ENCODE measurements at regions of chr4 and their contacts with region 1.

Region 1: GRCh38 chr4:68271851-68272756 is 26.6 kb upstream of the TMPRSS11B start:
- DNase-seq: peak; percentile 67
- H3K4me3 Mint-ChIP-seq: peak overlapping the region; percentile 77
- H3K27ac Mint-ChIP-seq: no peak overlapping the region
- H3K4me1 Mint-ChIP-seq: peaks cover 7% of the 10 kb centered on the region
- H3K27me3 Mint-ChIP-seq: no peaks in the 10 kb centered on the region
- CTCF ChIP-seq: peak; percentile 63

Region 2: GRCh38 chr4:67727124-67727850 is 544.8 kb before region 1 on chr4:
- CTCF ChIA-PET with region 1: no interaction called
- POLR2A ChIA-PET with region 1: no interaction called
- intact Hi-C with region 1: no loop called
- DNase-seq: no peak
- H3K4me3 Mint-ChIP-seq: no peak overlapping the region
- H3K27ac Mint-ChIP-seq: no peak overlapping the region
- H3K4me1 Mint-ChIP-seq: no peaks in the 10 kb centered on the region
- H3K27me3 Mint-ChIP-seq: no peaks in the 10 kb centered on the region
- CTCF ChIP-seq: no peak

Region 3: DNA sequence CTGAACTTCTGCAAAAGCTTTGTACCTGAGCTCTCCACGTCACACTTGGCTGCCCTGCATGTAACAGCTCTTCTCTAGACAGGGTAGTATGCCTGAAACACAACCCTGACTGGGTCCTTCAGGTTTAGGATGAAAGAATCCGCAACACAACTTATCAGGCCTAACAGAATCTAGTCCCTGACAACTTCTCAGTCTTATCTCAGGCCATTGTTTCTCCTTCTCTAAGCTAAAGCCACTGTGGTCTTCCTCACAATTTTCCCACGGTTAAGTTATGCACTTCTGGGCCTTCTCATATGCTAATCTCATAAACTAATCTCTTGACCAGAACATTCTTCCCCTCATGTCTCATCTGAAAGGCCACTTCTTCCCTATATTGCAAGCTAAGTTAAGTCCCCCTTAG is 15.8 kb before region 1 on chr4:
- CTCF ChIA-PET with region 1: interaction called, 12 read pairs
- POLR2A ChIA-PET with region 1: no interaction called
- intact Hi-C with region 1: no loop called
- DNase-seq: no peak
- H3K4me3 Mint-ChIP-seq: no peak overlapping the region
- H3K27ac Mint-ChIP-seq: no peak overlapping the region
- H3K4me1 Mint-ChIP-seq: no peaks in the 10 kb centered on the region
- H3K27me3 Mint-ChIP-seq: no peaks in the 10 kb centered on the region
- CTCF ChIP-seq: no peak

Region 4: DNA sequence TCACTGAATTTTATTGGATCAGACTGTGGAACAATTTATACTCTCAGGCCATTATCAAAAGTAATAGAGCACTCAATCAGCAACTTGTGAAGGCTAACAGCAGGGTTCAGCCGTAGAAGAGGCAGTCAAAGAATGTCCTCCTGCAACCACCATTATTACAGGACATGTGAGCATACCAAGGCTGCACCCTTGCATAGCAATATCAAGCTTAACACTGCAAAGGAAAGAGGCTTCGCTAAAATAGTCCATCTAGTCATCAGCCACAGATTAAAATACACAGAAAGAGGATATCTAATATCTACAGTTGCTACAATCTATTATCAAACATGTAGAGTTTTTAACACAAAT is 16.3 kb after region 1 on chr4:
- CTCF ChIA-PET with region 1: interaction called, 11 read pairs
- POLR2A ChIA-PET with region 1: no interaction called
- intact Hi-C with region 1: no loop called
- DNase-seq: no peak
- H3K4me3 Mint-ChIP-seq: no peak overlapping the region
- H3K27ac Mint-ChIP-seq: no peak overlapping the region
- H3K4me1 Mint-ChIP-seq: no peaks in the 10 kb centered on the region
- H3K27me3 Mint-ChIP-seq: no peaks in the 10 kb centered on the region
- CTCF ChIP-seq: no peak

Region 5: DNA sequence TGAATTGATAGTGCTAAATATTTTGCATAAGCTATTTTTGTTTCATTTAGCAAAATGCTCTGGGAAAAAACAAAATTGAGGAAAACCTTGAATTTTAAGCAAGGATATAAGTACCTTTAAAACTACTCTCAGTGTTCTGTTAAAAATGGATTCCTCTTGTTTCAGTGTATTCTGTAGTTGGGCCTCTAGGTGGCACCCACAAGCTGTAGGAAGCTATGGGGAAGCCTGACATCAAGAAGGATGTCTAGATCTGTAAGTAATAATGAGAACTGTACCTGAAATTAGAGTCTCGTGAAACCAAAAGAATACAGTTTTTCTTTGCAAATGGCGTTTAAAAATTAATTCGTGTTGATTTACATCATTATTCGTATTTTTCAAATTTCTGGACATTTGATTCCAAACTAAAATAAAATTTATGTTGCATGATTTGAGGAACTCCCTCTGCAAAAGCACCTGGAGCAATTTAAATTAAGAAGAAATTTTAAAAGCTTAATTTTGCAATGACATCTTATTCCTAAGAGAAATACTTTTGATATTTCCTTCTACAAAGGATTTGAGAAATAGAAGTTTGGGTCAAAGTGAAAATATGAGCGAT is 226.4 kb after region 1 on chr4:
- CTCF ChIA-PET with region 1: interaction called, 3 read pairs
- POLR2A ChIA-PET with region 1: no interaction called
- intact Hi-C with region 1: loop called (anchors 1 kb)
- DNase-seq: peak; percentile 79
- H3K4me3 Mint-ChIP-seq: no peak overlapping the region
- H3K27ac Mint-ChIP-seq: no peak overlapping the region
- H3K4me1 Mint-ChIP-seq: no peaks in the 10 kb centered on the region
- H3K27me3 Mint-ChIP-seq: no peaks in the 10 kb centered on the region
- CTCF ChIP-seq: peak; percentile 88

Region 6: GRCh38 chr4:69167300-69167699 is 895.2 kb after region 1 on chr4:
- CTCF ChIA-PET with region 1: interaction called, 3 read pairs
- POLR2A ChIA-PET with region 1: no interaction called
- intact Hi-C with region 1: loop called (anchors 5 kb)
- DNase-seq: no peak
- H3K4me3 Mint-ChIP-seq: no peak overlapping the region
- H3K27ac Mint-ChIP-seq: no peak overlapping the region
- H3K4me1 Mint-ChIP-seq: no peaks in the 10 kb centered on the region
- H3K27me3 Mint-ChIP-seq: no peaks in the 10 kb centered on the region
- CTCF ChIP-seq: no peak

Region 7: DNA sequence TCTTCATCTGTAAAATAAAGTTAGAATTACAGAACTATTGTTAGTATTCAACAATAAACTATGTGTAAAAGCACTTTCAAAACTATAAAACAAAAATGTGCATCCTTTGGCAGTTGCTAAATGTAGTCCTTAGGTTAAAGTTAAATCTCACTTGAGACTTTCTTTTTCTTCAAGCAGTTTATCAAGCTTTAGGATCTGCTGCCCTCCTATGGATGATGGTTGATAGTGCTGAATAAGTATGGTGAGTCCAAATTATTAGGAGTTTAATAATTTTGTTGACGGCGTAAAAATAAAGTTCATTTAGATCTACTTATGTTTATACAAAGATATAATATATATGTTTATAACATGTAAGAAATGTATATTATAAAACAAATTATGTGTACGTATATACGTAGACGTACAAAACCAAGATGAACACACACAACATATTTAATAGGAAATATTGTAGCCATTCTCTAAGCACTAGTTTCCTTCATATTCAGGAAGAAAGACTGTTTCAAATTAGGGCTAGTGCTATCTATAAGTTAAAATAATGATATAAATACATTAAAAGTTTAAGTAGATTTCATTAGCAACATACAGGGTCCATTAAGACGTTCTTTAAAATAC is 1345.1 kb after region 1 on chr4:
- CTCF ChIA-PET with region 1: no interaction called
- POLR2A ChIA-PET with region 1: no interaction called
- intact Hi-C with region 1: loop called (anchors 5 kb)
- DNase-seq: peak; percentile 66
- H3K4me3 Mint-ChIP-seq: no peak overlapping the region
- H3K27ac Mint-ChIP-seq: no peak overlapping the region
- H3K4me1 Mint-ChIP-seq: no peaks in the 10 kb centered on the region
- H3K27me3 Mint-ChIP-seq: peaks cover 43% of the 10 kb centered on the region
- CTCF ChIP-seq: peak; percentile 62